ENCODE measurements at regions of chr9 and their contacts with region 1.

Region 1: GRCh38 chr9:105385381-105385985 is 62.4 kb upstream of the FSD1L start:
- DNase-seq: peak in 8 of 9 donors; percentile 10 to 48 (median 35)
- ATAC-seq: peak; percentile 86
- H3K4me3 ChIP-seq: peak overlapping the region; percentile 59
- H3K4me3 Mint-ChIP-seq: peak overlapping the region; percentile 75 to 98 (median 92)
- H3K27ac ChIP-seq: peak overlapping the region; percentile 65
- H3K27ac Mint-ChIP-seq: peak overlapping the region; percentile 74 to 96 (median 83)
- H3K4me1 ChIP-seq: peaks cover 0 to 4% of the 10 kb centered on the region in 2 donors
- H3K4me1 Mint-ChIP-seq: peaks cover 5 to 23% (median 19%) of the 10 kb centered on the region in 7 donors
- H3K27me3 ChIP-seq: no peaks in the 10 kb centered on the region
- H3K27me3 Mint-ChIP-seq: peaks cover 0 to 19% (median 0%) of the 10 kb centered on the region in 5 donors

Region 2: GRCh38 chr9:105341434-105342144 is 43.9 kb before region 1 on chr9:
- CTCF ChIA-PET with region 1: no interaction called
- POLR2A ChIA-PET with region 1: no interaction called
- intact Hi-C with region 1: loop called in 1 of 2 experiments (anchors 5 kb)
- DNase-seq: no peak
- ATAC-seq: no peak
- H3K4me3 ChIP-seq: no peak overlapping the region
- H3K4me3 Mint-ChIP-seq: peak overlapping the region in 7 of 10 donors; percentile 37 to 66 (median 48)
- H3K27ac ChIP-seq: no peak overlapping the region
- H3K27ac Mint-ChIP-seq: peak overlapping the region in 3 of 9 donors; percentile 8 to 15 (median 14)
- H3K4me1 ChIP-seq: no peaks in the 10 kb centered on the region
- H3K4me1 Mint-ChIP-seq: peaks cover 12 to 23% (median 22%) of the 10 kb centered on the region in 7 donors
- H3K27me3 ChIP-seq: no peaks in the 10 kb centered on the region
- H3K27me3 Mint-ChIP-seq: no peaks in the 10 kb centered on the region

Region 3: GRCh38 chr9:105405514-105406131 is 20.1 kb after region 1 on chr9:
- CTCF ChIA-PET with region 1: no interaction called
- POLR2A ChIA-PET with region 1: no interaction called
- intact Hi-C with region 1: loop called (anchors 1 to 2 kb)
- DNase-seq: peak in 8 of 9 donors; percentile 61 to 92 (median 90)
- ATAC-seq: peak; percentile 94
- H3K4me3 ChIP-seq: peak overlapping the region; percentile 1
- H3K4me3 Mint-ChIP-seq: peak overlapping the region in 9 of 10 donors; percentile 63 to 84 (median 75)
- H3K27ac ChIP-seq: no peak overlapping the region
- H3K27ac Mint-ChIP-seq: peak overlapping the region in 8 of 9 donors; percentile 11 to 96 (median 90)
- H3K4me1 ChIP-seq: peaks cover 19 to 22% of the 10 kb centered on the region in 2 donors
- H3K4me1 Mint-ChIP-seq: peaks cover 20 to 42% (median 34%) of the 10 kb centered on the region in 7 donors
- H3K27me3 ChIP-seq: peaks cover 0 to 6% of the 10 kb centered on the region in 2 donors
- H3K27me3 Mint-ChIP-seq: peaks cover 34 to 82% (median 59%) of the 10 kb centered on the region in 5 donors

Region 4: DNA sequence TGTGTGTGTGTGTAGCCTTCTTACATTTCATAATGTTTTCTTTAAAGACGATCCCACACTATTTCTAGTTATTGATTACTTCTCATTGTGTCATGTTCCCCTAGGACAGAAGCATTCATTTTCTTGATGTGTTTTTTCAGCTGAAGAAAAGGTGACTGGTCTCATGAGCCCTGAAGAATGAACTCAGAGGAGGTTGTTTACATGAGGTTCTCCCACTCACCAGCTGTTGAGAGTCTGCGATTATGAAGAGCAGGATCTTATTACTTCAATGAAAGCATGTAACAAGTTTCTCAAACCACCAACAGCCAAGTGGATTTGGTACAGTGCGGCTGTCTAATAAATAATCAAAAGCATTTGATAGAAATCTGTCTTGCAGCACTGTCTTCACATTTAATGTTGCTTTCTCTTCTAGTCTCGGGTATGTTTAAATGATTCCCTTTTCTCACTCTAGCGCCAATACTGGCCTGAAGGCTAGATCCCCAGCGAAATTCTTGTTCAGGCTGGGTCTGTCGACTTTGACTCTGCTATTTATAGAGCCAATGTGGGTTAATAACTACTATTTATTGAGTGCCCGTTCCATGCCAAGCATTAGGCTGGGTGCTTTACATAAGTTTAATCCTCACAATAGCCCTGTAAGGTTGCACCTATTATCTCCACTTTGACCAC is 52.8 kb after region 1 on chr9:
- CTCF ChIA-PET with region 1: no interaction called
- POLR2A ChIA-PET with region 1: no interaction called
- intact Hi-C with region 1: no loop called
- DNase-seq: no peak
- ATAC-seq: no peak
- H3K4me3 ChIP-seq: no peak overlapping the region
- H3K4me3 Mint-ChIP-seq: no peak overlapping the region
- H3K27ac ChIP-seq: no peak overlapping the region
- H3K27ac Mint-ChIP-seq: no peak overlapping the region
- H3K4me1 ChIP-seq: no peaks in the 10 kb centered on the region
- H3K4me1 Mint-ChIP-seq: no peaks in the 10 kb centered on the region
- H3K27me3 ChIP-seq: no peaks in the 10 kb centered on the region
- H3K27me3 Mint-ChIP-seq: peaks cover 0 to 12% (median 0%) of the 10 kb centered on the region in 5 donors

Measured in naive thymus-derived CD4-positive, alpha-beta T cell (primary cell).